ENCODE measurements at regions of chr19 and their contacts with region 1.

Region 1: GRCh38 chr19:10000171-10000826 is 10.0 kb downstream of the COL5A3 start:
- DNase-seq: no peak
- H3K4me3 ChIP-seq: no peak overlapping the region
- H3K27me3 ChIP-seq: no peaks in the 10 kb centered on the region
- CTCF ChIP-seq: peak; percentile 92

Region 2: GRCh38 chr19:9939301-9939913 is 60.9 kb before region 1 on chr19:
- CTCF ChIA-PET with region 1: interaction called, 31 read pairs
- POLR2A ChIA-PET with region 1: no interaction called
- DNase-seq: no peak
- H3K4me3 ChIP-seq: no peak overlapping the region
- H3K27me3 ChIP-seq: peaks cover 14% of the 10 kb centered on the region
- CTCF ChIP-seq: no peak

Region 3: DNA sequence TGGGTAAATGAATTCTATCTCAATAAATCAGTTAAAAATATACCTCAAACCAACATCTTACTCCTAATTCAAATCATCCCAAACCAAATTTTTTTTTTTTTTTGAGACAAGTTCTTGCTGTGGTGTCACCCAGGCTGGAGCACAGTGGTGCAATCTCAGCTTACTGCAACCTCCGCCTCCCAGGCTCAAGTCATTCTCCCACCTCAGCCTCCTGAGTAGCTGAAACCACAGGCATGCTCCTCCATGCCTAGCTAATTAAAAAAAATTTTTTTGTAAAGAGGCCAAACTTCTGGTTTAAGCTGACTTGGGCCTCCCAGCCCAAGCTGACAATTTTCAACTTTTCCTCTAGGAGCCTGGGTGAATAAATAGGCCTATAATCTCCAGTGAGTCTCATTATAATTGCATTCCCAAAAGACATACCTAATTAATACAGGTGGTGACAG is 41.9 kb before region 1 on chr19:
- CTCF ChIA-PET with region 1: interaction called, 21 read pairs
- POLR2A ChIA-PET with region 1: no interaction called
- DNase-seq: peak; percentile 92
- H3K4me3 ChIP-seq: no peak overlapping the region
- H3K27me3 ChIP-seq: no peaks in the 10 kb centered on the region
- CTCF ChIP-seq: 0 out of 2 replicates have a peak, but pooled peaks have one; percentile 16

Region 4: DNA sequence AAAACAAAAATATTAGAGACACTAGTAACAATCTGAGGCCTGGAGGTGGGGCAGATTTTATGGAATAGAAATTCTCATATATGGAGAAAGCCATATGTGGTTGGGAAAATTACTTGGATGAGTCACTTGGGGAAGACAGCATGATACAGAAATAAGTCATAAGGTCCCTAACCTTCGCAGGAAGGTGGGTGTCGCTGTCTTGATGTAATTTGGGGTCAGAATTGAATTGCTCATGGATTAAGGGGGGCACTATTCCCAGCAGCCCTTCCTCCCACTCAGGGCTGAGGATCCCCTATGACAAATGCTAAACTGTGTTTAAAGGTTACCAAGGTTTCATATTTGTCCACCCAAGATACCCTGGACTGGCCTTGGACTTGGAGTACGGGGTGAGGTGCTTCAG is 18.0 kb after region 1 on chr19:
- CTCF ChIA-PET with region 1: interaction called, 12 read pairs
- POLR2A ChIA-PET with region 1: no interaction called
- DNase-seq: peak; percentile 38
- H3K4me3 ChIP-seq: no peak overlapping the region
- H3K27me3 ChIP-seq: peaks cover 3% of the 10 kb centered on the region; the same call in 1 of the 2 replicates
- CTCF ChIP-seq: no peak

Measured in BJ (cell line).